K562 (cell line): ENCODE measurements at regions of chr6 and their contacts with region 1.

Region 1: GRCh38 chr6:156686995-156687788 is 90.0 kb upstream of the ARID1B start:
- DNase-seq: peak; percentile 86 to 99 (median 98)
- ATAC-seq: peak; percentile 88
- H3K4me3 ChIP-seq: peak overlapping the region; percentile 75
- H3K27ac ChIP-seq: peak overlapping the region; percentile 90
- H3K4me1 ChIP-seq: peaks cover 7 to 16% of the 10 kb centered on the region in 2 experiments; a peak in 4 of 5 replicates
- H3K27me3 ChIP-seq: peaks cover 3 to 4% of the 10 kb centered on the region in 2 experiments; a peak in 2 of 5 replicates
- CTCF ChIP-seq: no peak
- EP300 ChIP-seq: no peak; the same call in 1 of the 2 replicates
- POLR2A ChIP-seq: peak; percentile 95
- RAD21 ChIP-seq: 0 out of 4 replicates have a peak, but pooled peaks of 1 of the 2 experiments have one; percentile 7

Region 2: DNA sequence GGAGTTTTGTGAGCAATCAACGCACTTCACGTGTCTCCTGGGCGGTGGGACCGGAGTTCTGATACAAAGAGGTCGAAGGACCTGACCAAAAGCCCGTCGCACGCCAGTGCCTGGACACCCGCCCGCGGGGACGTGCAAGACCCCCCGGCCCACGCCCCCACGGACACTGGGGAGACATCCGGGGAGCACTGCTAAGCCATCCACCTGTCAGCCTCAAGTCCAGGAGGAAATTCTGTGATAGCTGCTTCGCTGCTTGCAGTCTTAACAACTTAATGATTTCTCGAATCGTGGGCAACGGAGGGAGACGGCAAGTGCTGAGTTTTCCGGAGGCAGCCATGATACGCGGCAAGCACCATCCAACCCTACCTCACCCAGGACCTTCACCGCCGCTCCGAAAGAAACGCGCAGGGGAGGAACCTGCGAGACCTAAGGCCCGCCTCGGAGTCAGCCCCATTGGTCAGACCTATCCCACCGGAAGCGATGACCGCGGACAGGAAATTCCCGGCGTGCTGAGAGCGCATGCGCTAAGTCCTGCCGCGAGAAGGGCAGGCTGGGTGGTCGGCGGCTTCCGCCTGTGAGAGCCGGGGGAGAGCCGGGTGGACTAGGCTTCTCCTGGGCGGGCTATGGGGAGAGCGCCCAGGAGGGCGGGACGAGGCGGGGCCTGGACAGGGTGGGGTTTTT is 1373.0 kb before region 1 on chr6 and contains the start of gene TFB1M:
- CTCF ChIA-PET with region 1: no interaction called
- POLR2A ChIA-PET with region 1: no interaction called
- in situ Hi-C with region 1: no loop called
- intact Hi-C with region 1: loop called (anchors 10 kb)
- DNase-seq: peak; percentile 95 to 100 (median 96)
- ATAC-seq: peak; percentile 98
- H3K4me3 ChIP-seq: peak within 1 kb of the TSS; percentile 88
- H3K27ac ChIP-seq: peak within 1 kb of the TSS; percentile 94
- H3K4me1 ChIP-seq: peaks cover 4 to 7% of the 10 kb centered on the region in 2 experiments; a peak in 3 of 5 replicates
- H3K27me3 ChIP-seq: no peaks in the 10 kb centered on the region
- CTCF ChIP-seq: 0 out of 6 replicates have a peak, but pooled peaks of 1 of the 3 experiments have one; percentile 2
- EP300 ChIP-seq: 0 out of 2 replicates have a peak, but pooled peaks have one; percentile 5
- POLR2A ChIP-seq: peak; percentile 96
- RAD21 ChIP-seq: no peak
- polyA plus RNA-seq, gene TFB1M: 129 to 145 TPM

Region 3: GRCh38 chr6:156741287-156742073 is 54.3 kb after region 1 on chr6:
- CTCF ChIA-PET with region 1: no interaction called
- POLR2A ChIA-PET with region 1: no interaction called
- in situ Hi-C with region 1: no loop called
- intact Hi-C with region 1: no loop called
- DNase-seq: no peak
- ATAC-seq: no peak
- H3K4me3 ChIP-seq: no peak overlapping the region
- H3K27ac ChIP-seq: no peak overlapping the region
- H3K4me1 ChIP-seq: no peaks in the 10 kb centered on the region
- H3K27me3 ChIP-seq: peaks cover 1 to 5% of the 10 kb centered on the region in 2 experiments; a peak in 1 of 5 replicates
- CTCF ChIP-seq: no peak
- EP300 ChIP-seq: no peak
- POLR2A ChIP-seq: no peak
- RAD21 ChIP-seq: no peak

Region 4: DNA sequence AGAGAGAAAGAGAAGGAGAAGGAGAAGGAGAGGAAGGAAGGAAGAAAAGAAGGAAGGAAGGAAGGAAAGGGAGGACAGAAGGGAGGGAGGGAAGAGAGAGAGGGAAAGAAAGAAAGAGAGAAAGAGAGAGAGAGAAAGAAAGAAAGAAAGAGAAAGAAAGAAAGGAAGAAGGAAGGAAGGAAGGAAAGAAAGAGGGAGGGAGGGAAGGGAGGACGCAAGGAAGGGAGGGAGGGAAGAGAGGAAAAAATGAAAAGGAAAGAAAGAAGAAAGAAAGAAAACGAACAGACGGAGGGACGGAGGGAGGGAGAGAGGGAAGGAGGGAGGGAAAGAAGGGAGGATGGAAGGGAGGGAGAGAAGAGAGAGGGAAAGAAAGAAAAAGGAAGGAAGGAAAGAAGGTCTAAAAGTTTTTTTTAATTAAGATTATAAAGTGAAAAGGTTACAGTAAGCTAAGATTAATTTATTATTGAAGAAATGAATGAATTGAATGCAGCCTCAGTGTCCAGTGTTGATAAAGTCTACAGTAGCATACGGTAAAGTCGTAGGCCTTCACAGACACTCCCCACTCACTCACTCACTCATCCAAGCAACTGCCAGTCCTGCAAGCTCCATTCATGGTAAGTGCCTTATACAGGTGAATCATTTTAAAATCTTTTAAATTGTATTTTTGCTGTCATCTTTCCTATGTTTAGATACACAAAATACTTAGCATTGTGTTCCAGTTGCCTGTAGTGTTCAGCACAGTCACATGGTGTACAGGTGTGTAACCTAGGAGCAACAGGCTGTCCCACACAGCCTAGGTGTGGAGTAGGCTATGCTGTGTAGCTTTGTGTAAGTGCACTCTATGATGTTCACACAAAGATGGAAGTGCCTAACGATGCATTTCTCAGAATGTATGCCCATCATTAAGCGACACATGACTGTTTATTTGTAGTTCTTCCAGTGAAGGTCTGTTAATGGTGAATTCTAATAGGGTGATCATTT is 69.7 kb after region 1 on chr6:
- CTCF ChIA-PET with region 1: no interaction called
- POLR2A ChIA-PET with region 1: no interaction called
- in situ Hi-C with region 1: no loop called
- intact Hi-C with region 1: loop called (anchors 5 kb)
- DNase-seq: no peak
- ATAC-seq: peak; percentile 62
- H3K4me3 ChIP-seq: no peak overlapping the region
- H3K27ac ChIP-seq: no peak overlapping the region
- H3K4me1 ChIP-seq: 0 out of 5 replicates have a peak, but pooled peaks cover 0 to 3% of the 10 kb centered on the region in 2 experiments
- H3K27me3 ChIP-seq: peaks cover 4 to 16% of the 10 kb centered on the region in 2 experiments; a peak in 4 of 5 replicates
- CTCF ChIP-seq: no peak
- EP300 ChIP-seq: no peak
- POLR2A ChIP-seq: no peak
- RAD21 ChIP-seq: no peak

Region 5: DNA sequence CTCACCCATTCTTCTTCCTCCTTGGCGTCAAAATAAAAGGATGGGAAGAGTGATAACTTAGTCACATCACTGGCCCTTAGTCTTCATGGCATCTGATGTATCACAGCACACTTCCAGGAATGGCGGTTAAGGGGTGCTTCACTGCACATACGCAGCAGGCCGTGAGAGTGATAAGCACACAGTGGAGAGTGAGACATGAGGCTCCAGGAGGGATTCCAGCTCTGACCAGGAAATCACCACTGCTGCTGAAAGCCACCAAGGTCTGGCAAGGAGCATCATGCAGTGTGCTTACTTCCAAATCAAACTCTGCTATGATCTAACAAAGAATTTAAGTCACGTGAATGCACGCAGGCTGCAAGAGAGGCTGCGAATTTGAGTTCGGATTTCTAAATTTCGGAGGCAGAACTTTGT is 152.4 kb after region 1 on chr6:
- CTCF ChIA-PET with region 1: no interaction called
- POLR2A ChIA-PET with region 1: no interaction called
- in situ Hi-C with region 1: no loop called
- intact Hi-C with region 1: loop called (anchors 5 kb)
- DNase-seq: peak in 3 of 4 experiments; percentile 32 to 81 (median 66)
- ATAC-seq: peak; percentile 88
- H3K4me3 ChIP-seq: no peak overlapping the region
- H3K27ac ChIP-seq: peak overlapping the region; percentile 29; the same call in 2 of the 3 replicates
- H3K4me1 ChIP-seq: peaks cover 15 to 28% of the 10 kb centered on the region in 2 experiments
- H3K27me3 ChIP-seq: no peaks in the 10 kb centered on the region
- CTCF ChIP-seq: no peak
- EP300 ChIP-seq: no peak; the same call in 1 of the 2 replicates
- POLR2A ChIP-seq: no peak
- RAD21 ChIP-seq: no peak

Region 6: DNA sequence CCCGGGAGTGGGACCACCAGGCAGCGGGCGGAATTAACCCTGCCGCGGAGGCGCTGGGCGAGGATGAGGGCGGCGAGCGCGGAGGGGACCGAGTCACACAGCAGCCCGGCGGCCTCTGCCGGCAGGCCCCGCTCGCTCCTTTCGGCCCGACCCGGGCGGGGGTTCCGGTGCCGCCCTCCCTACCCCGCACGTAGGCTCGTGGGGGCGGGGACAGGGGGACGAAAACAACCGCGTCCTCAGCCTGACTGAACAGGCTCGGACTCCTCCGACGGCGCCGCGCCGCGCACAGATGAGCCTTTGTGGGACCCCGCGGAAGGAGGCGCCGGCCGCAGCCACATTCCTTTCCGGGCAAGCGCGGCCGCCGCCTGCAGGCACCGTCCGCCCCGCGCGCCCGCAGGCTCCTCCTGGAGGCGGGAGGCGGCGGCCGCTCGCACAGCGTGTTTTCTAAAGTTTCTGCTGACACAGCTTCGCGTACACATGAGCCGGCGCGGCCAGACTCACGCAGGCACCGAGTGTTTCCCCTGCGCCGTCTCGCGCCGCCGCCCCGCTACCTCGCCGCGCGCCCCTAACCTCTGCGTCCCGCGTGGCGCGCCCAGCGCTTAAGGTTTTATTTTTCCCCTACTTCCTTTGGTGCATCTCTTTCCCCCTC is 334.3 kb after region 1 on chr6:
- CTCF ChIA-PET with region 1: no interaction called
- POLR2A ChIA-PET with region 1: no interaction called
- in situ Hi-C with region 1: no loop called
- intact Hi-C with region 1: loop called (anchors 10 kb)
- DNase-seq: peak; percentile 87 to 93 (median 90)
- ATAC-seq: peak; percentile 92
- H3K4me3 ChIP-seq: peak overlapping the region; percentile 74
- H3K27ac ChIP-seq: peak overlapping the region; percentile 98
- H3K4me1 ChIP-seq: peaks cover 19 to 25% of the 10 kb centered on the region in 2 experiments
- H3K27me3 ChIP-seq: no peaks in the 10 kb centered on the region
- CTCF ChIP-seq: peak; percentile 52 to 73 (median 54); a peak in 5 of 6 replicates
- EP300 ChIP-seq: no peak
- POLR2A ChIP-seq: peak; percentile 96
- RAD21 ChIP-seq: peak; percentile 10 to 42